CD8-positive, alpha-beta T cell (primary cell): ENCODE measurements at regions of chr17 and their contacts with region 1.

Region 1: GRCh38 chr17:2401426-2402221 is 764 bp upstream of the MNT start:
- DNase-seq: peak; percentile 99 to 100 (median 99)
- ATAC-seq: peak; percentile 59
- H3K4me3 ChIP-seq: peak overlapping the region; percentile 65 to 71
- H3K4me3 Mint-ChIP-seq: peak overlapping the region; percentile 99
- H3K27ac ChIP-seq: peak overlapping the region; percentile 99
- H3K27ac Mint-ChIP-seq: peak overlapping the region; percentile 100
- H3K4me1 ChIP-seq: peaks cover 35% of the 10 kb centered on the region
- H3K4me1 Mint-ChIP-seq: peaks cover 36% of the 10 kb centered on the region
- H3K27me3 ChIP-seq: no peaks in the 10 kb centered on the region
- H3K27me3 Mint-ChIP-seq: no peaks in the 10 kb centered on the region
- CTCF ChIP-seq: no peak

Region 2: GRCh38 chr17:1648963-1649843 is 752.4 kb before region 1 on chr17:
- CTCF ChIA-PET with region 1: no interaction called
- POLR2A ChIA-PET with region 1: interaction called, 3 read pairs
- intact Hi-C with region 1: loop called (anchors 2 to 10 kb)
- DNase-seq: peak; percentile 90 to 98 (median 93)
- ATAC-seq: peak; percentile 76
- H3K4me3 ChIP-seq: peak overlapping the region; percentile 34 to 70
- H3K4me3 Mint-ChIP-seq: peak overlapping the region; percentile 74
- H3K27ac ChIP-seq: peak overlapping the region in 1 of 2 experiments; percentile 44
- H3K27ac Mint-ChIP-seq: peak overlapping the region; percentile 49
- H3K4me1 ChIP-seq: peaks cover 16% of the 10 kb centered on the region
- H3K4me1 Mint-ChIP-seq: peaks cover 14% of the 10 kb centered on the region
- H3K27me3 ChIP-seq: no peaks in the 10 kb centered on the region
- H3K27me3 Mint-ChIP-seq: no peaks in the 10 kb centered on the region
- CTCF ChIP-seq: peak; percentile 71

Region 3: GRCh38 chr17:2054512-2055291 is 346.9 kb before region 1 on chr17 and contains the start of gene HIC1:
- CTCF ChIA-PET with region 1: no interaction called
- POLR2A ChIA-PET with region 1: no interaction called
- intact Hi-C with region 1: loop called (anchors 2 to 5 kb)
- DNase-seq: peak; percentile 64 to 88 (median 73)
- ATAC-seq: peak; percentile 45
- H3K4me3 ChIP-seq: peak within 1 kb of the TSS; percentile 48 to 65
- H3K4me3 Mint-ChIP-seq: peak within 1 kb of the TSS; percentile 78
- H3K27ac ChIP-seq: peak within 1 kb of the TSS; percentile 56 to 74
- H3K27ac Mint-ChIP-seq: peak within 1 kb of the TSS; percentile 81
- H3K4me1 ChIP-seq: peaks cover 64% of the 10 kb centered on the region
- H3K4me1 Mint-ChIP-seq: peaks cover 31% of the 10 kb centered on the region
- H3K27me3 ChIP-seq: peaks cover 0 to 2% of the 10 kb centered on the region in 2 experiments
- H3K27me3 Mint-ChIP-seq: peaks cover 13% of the 10 kb centered on the region
- CTCF ChIP-seq: peak; percentile 85
- total RNA-seq, gene HIC1: 12.1 to 13.0 TPM

Region 4: GRCh38 chr17:2336215-2336851 is 65.3 kb before region 1 on chr17 and contains the start of gene TSR1:
- CTCF ChIA-PET with region 1: no interaction called
- POLR2A ChIA-PET with region 1: interaction called, 11 read pairs
- intact Hi-C with region 1: loop called (anchors 1 kb)
- DNase-seq: peak; percentile 68 to 94 (median 89)
- ATAC-seq: peak; percentile 80
- H3K4me3 ChIP-seq: peak within 1 kb of the TSS; percentile 77 to 88
- H3K4me3 Mint-ChIP-seq: peak within 1 kb of the TSS; percentile 98
- H3K27ac ChIP-seq: peak within 1 kb of the TSS; percentile 78 to 80
- H3K27ac Mint-ChIP-seq: peak within 1 kb of the TSS; percentile 95
- H3K4me1 ChIP-seq: peaks cover 16% of the 10 kb centered on the region
- H3K4me1 Mint-ChIP-seq: peaks cover 31% of the 10 kb centered on the region
- H3K27me3 ChIP-seq: no peaks in the 10 kb centered on the region
- H3K27me3 Mint-ChIP-seq: no peaks in the 10 kb centered on the region
- CTCF ChIP-seq: peak; percentile 24
- total RNA-seq, gene TSR1: 36.5 to 39.6 TPM

Region 5: DNA sequence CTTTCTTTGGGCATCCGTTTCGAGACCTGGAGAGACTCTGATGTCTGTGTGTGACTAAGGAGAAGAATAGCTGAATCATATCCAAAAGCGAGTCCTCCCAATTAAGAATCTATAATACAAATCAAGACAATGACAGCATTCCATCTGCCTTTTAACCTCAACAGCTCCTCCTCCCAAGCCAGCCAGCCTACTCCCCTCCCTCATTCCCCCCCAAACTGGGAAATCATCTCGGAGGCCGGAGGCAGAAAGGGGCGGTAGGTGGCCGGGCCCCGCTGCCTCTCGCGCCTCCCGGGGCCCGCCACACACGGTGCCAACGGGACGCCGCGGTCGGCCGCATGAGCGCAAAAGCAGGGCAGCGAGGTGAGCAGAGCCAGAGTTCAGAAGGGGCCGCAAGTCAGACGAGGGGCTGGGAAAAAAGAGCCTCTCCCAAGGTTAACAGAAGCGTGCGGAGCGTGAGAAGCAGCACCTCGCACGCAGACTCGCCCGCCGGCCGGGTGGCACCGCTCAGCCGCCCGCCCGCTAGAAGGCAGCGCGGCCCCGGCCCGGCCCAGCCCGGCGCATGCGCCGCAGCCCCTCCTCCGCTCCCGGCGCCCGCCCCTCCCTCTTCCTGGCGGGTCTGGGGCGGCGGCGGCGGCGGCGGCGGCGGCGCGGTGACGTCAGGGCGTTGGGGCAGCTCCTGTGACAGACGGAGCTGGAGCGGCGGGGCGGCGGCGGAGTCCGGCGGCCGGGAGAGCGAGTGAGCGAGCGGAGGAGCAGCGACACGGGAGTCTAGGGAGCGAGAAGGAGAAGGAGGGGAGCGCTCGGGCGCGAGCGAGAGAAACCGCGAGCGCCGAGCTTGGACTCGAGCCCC is 191.6 kb after region 1 on chr17 and contains the start of gene PAFAH1B1:
- CTCF ChIA-PET with region 1: no interaction called
- POLR2A ChIA-PET with region 1: interaction called, 4 read pairs
- intact Hi-C with region 1: loop called (anchors 1 to 5 kb)
- DNase-seq: peak; percentile 90 to 98 (median 94)
- ATAC-seq: peak; percentile 76
- H3K4me3 ChIP-seq: peak within 1 kb of the TSS; percentile 96 to 97
- H3K4me3 Mint-ChIP-seq: peak within 1 kb of the TSS; percentile 87
- H3K27ac ChIP-seq: peak within 1 kb of the TSS; percentile 86 to 97
- H3K27ac Mint-ChIP-seq: peak within 1 kb of the TSS; percentile 95
- H3K4me1 ChIP-seq: peaks cover 25% of the 10 kb centered on the region
- H3K4me1 Mint-ChIP-seq: peaks cover 33% of the 10 kb centered on the region
- H3K27me3 ChIP-seq: no peaks in the 10 kb centered on the region
- H3K27me3 Mint-ChIP-seq: no peaks in the 10 kb centered on the region
- CTCF ChIP-seq: no peak
- total RNA-seq, gene PAFAH1B1: 139 to 157 TPM

Region 6: GRCh38 chr17:3893003-3893719 is 1491.5 kb after region 1 on chr17 and contains the start of gene CAMKK1:
- CTCF ChIA-PET with region 1: no interaction called
- POLR2A ChIA-PET with region 1: no interaction called
- intact Hi-C with region 1: loop called in 1 of 2 experiments (anchors 2 kb)
- DNase-seq: peak; percentile 70 to 93 (median 88)
- ATAC-seq: peak; percentile 69
- H3K4me3 ChIP-seq: peak within 1 kb of the TSS; percentile 48 to 79
- H3K4me3 Mint-ChIP-seq: peak within 1 kb of the TSS; percentile 86
- H3K27ac ChIP-seq: peak within 1 kb of the TSS; percentile 33 to 35
- H3K27ac Mint-ChIP-seq: peak within 1 kb of the TSS; percentile 88
- H3K4me1 ChIP-seq: peaks cover 18% of the 10 kb centered on the region
- H3K4me1 Mint-ChIP-seq: peaks cover 20% of the 10 kb centered on the region
- H3K27me3 ChIP-seq: no peaks in the 10 kb centered on the region
- H3K27me3 Mint-ChIP-seq: no peaks in the 10 kb centered on the region
- CTCF ChIP-seq: no peak
- total RNA-seq, gene CAMKK1: 5.3 to 5.9 TPM